ENCODE measurements at regions of chr1 and their contacts with region 1.

Region 1: GRCh38 chr1:101366513-101367215 is 129.8 kb downstream of the S1PR1 start:
- DNase-seq: no peak
- H3K4me3 ChIP-seq: no peak overlapping the region
- H3K27ac ChIP-seq: no peak overlapping the region
- H3K27me3 ChIP-seq: peaks cover 0 to 3% (median 0%) of the 10 kb centered on the region in 45 donors
- CTCF ChIP-seq: no peak

Region 2: GRCh38 chr1:100921109-100921706 is 445.5 kb before region 1 on chr1:
- intact Hi-C with region 1: loop called in 1 of 2 experiments (anchors 10 kb)
- DNase-seq: no peak
- H3K4me3 ChIP-seq: no peak overlapping the region
- H3K27ac ChIP-seq: no peak overlapping the region
- H3K27me3 ChIP-seq: no peaks in the 10 kb centered on the region
- CTCF ChIP-seq: peak; percentile 63 to 90 (median 78)

Region 3: GRCh38 chr1:101203820-101204540 is 162.7 kb before region 1 on chr1:
- intact Hi-C with region 1: no loop called
- DNase-seq: peak in 1 of 10 donors; percentile 11
- H3K4me3 ChIP-seq: no peak overlapping the region
- H3K27ac ChIP-seq: peak overlapping the region in 28 of 59 donors; percentile 1 to 80 (median 42)
- H3K27me3 ChIP-seq: no peaks in the 10 kb centered on the region
- CTCF ChIP-seq: no peak

Measured in dorsolateral prefrontal cortex (tissue), 120 donors.